ENCODE measurements at regions of chr20 and their contacts with region 1.

Region 1: DNA sequence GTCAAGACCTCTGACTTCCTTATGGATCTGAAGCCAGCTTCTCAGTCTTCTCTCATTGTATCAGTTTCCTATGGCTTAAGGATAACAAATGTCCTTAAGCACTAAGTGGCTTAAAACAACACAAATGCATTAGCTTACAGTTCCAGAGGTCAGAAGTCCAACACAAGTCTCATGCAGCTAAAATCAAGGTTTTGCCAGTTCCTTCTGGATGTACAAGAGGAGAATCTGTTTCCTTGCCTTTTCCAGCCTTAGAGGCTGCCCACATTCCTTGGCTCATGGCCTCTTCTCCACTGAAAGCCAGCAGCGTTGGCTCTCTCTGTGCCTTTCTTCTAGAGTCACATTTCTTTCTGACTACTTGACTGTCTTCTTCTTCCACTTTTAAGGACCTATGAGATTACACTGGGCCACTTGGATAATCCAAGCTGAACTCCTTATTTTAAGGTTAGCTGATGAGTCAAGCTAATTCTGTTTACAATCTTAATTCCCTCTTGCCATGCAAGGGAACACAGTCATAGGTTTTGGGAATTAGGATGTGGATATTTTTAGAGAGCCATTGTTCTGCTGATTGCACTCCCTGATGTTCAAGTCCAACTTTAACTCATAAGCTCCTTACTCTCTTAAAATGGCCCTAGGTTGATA is 179.0 kb downstream of the BCAS1 start:
- DNase-seq: no peak
- ATAC-seq: no peak
- H3K4me3 Mint-ChIP-seq: no peak overlapping the region
- H3K27ac Mint-ChIP-seq: no peak overlapping the region
- H3K4me1 Mint-ChIP-seq: peaks cover 44% of the 10 kb centered on the region
- H3K27me3 Mint-ChIP-seq: no peaks in the 10 kb centered on the region

Region 2: DNA sequence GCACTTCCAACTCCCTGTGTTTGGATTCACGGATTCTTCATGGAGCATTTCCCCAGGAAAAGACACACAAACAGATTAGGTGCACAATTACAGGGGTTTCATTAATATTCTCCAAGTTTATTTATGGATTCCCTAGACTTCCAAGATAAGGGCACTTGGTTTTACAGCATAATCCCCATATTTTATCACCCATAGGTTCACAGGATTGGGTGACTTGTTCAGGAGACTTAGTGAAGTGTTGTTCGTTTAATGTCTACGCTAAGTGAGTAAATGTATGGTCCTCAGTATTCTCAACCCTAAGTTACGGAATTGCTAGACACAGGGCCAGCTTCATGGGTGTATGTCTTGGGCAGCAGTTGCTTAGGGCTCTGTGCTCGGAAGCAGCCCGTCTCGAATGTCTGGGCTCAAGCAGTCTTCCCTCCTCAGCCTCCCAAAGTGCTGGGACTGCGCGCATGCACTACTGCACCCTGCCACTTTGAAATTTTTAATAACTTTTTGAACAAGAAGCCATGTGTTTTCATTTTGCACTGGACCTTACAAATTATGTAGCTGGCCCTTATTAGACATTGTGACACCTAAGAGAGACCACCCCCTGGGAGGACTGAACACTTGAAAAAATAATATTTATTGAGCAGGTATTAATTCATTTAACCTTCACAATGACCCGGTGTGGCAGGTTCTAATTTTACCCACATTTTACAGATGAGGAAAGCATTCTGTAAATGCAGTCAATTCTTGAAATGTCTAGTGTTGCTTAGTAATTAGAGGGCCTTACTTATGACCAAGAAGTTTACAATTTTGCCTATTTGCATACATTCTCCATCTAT is 206.2 kb before region 1 on chr20:
- CTCF ChIA-PET with region 1: no interaction called
- POLR2A ChIA-PET with region 1: interaction called, 4 read pairs
- intact Hi-C with region 1: loop called (anchors 1 to 5 kb)
- DNase-seq: no peak
- ATAC-seq: peak; percentile 7
- H3K4me3 Mint-ChIP-seq: no peak overlapping the region
- H3K27ac Mint-ChIP-seq: peak overlapping the region; percentile 56
- H3K4me1 Mint-ChIP-seq: peaks cover 26% of the 10 kb centered on the region
- H3K27me3 Mint-ChIP-seq: no peaks in the 10 kb centered on the region

Region 3: DNA sequence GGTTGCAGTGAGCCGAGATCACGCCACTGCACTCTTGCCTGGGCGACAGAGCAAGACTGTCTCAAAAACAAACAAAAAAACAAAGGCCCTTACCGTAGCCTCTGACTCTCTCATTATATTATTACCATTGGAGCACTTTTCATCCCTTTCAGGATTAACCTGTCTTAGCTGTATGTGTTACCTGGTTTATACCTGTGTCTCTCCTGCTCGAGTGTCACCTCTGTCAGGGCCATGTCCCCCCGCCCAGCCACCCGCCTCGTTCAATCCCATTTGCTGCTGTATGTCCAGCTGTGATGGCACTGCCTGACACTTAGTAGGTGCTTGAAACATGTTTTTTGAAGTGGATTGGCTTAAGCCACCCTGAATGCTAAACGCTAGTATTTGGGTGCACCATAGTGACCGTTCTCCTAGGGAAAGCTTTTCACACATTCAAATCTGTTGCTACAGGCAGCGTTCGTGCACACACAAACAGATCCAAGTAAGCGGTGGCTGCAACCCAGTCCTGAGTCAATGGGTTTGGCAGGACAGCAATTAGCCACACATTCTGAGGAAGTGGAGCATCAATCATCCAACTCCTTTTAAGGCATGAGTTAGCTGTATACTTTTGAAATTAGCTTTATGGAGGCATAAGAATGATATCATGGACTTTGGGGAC is 198.9 kb before region 1 on chr20:
- CTCF ChIA-PET with region 1: no interaction called
- POLR2A ChIA-PET with region 1: no interaction called
- intact Hi-C with region 1: loop called (anchors 1 to 5 kb)
- DNase-seq: peak; percentile 24
- ATAC-seq: peak; percentile 30
- H3K4me3 Mint-ChIP-seq: peak overlapping the region; percentile 39
- H3K27ac Mint-ChIP-seq: no peak overlapping the region
- H3K4me1 Mint-ChIP-seq: peaks cover 31% of the 10 kb centered on the region
- H3K27me3 Mint-ChIP-seq: no peaks in the 10 kb centered on the region

Region 4: DNA sequence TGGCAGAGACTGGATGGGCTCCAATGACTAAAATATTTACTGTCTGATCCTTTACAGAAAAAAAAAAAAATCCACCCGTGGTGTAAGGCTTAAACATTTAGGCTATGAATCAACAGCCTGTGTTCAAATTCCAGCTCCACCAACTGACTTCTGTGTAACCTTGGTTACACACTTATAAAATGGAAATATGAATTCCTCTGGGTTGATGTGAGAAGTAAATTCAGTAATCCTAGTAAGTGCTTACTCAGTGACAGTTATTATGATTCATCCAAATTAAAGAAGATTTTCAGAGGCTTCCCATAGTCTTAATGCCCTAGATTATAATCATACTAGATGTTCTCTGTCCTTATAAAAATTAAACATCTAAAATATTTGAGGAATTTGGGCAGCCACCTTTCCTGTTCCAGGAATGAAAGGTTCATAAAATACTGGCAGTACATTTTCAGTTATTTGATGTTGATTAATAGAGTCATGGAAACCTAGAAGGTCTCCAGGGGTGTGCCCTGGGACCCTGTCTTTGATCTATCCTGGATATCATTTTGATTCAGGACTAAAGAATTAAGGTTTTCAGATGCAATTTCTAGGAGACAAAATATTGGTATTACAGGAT is 117.5 kb before region 1 on chr20:
- CTCF ChIA-PET with region 1: no interaction called
- POLR2A ChIA-PET with region 1: no interaction called
- intact Hi-C with region 1: loop called in 1 of 2 experiments (anchors 1 kb)
- DNase-seq: no peak
- ATAC-seq: peak; percentile 93
- H3K4me3 Mint-ChIP-seq: no peak overlapping the region
- H3K27ac Mint-ChIP-seq: peak overlapping the region; percentile 14
- H3K4me1 Mint-ChIP-seq: peaks cover 15% of the 10 kb centered on the region
- H3K27me3 Mint-ChIP-seq: no peaks in the 10 kb centered on the region

Region 5: GRCh38 chr20:53857723-53858236 is 33.6 kb before region 1 on chr20:
- CTCF ChIA-PET with region 1: no interaction called
- POLR2A ChIA-PET with region 1: no interaction called
- intact Hi-C with region 1: no loop called
- DNase-seq: no peak
- ATAC-seq: no peak
- H3K4me3 Mint-ChIP-seq: no peak overlapping the region
- H3K27ac Mint-ChIP-seq: no peak overlapping the region
- H3K4me1 Mint-ChIP-seq: peaks cover 21% of the 10 kb centered on the region
- H3K27me3 Mint-ChIP-seq: no peaks in the 10 kb centered on the region